HepG2 (cell line): ENCODE measurements at regions of chr14 and their contacts with region 1.

Region 1: DNA sequence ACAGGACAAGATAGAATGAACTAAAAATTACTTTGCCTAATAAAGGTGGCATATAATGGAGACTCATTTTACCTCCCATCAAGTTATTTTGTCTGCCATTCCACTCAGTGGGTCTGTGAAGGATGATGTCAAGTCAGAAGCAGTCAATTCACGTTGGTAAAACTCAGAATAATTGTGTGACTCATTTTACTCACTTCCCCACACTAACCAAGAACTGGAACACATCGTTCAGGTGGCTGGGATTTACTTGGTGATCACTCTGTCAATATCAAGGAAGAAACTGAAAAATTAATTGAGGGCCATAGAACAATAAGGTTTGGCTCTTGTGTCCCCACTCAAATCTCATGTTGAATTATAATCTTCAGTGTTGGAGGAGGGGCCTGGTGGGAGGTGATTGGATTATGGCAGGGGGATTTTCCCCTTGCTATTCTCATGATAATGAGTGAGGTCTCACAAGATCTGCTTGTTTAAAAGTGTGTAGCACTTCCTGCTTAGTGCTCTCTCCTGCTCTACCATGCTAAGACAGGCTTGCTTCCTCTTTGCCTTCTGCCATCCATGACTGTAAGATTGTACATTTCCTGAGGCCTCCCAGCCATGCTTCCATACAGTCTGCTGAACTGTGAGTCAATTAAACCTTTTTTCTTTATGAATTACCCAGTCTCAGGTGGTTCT is 35.7 kb upstream of the GTF2A1 start:
- DNase-seq: no peak
- ATAC-seq: no peak
- H3K4me3 ChIP-seq: no peak overlapping the region
- H3K27ac ChIP-seq: no peak overlapping the region
- H3K4me1 ChIP-seq: no peaks in the 10 kb centered on the region
- H3K27me3 ChIP-seq: no peaks in the 10 kb centered on the region
- CTCF ChIP-seq: no peak
- EP300 ChIP-seq: no peak
- POLR2A ChIP-seq: no peak
- RAD21 ChIP-seq: no peak

Region 2: DNA sequence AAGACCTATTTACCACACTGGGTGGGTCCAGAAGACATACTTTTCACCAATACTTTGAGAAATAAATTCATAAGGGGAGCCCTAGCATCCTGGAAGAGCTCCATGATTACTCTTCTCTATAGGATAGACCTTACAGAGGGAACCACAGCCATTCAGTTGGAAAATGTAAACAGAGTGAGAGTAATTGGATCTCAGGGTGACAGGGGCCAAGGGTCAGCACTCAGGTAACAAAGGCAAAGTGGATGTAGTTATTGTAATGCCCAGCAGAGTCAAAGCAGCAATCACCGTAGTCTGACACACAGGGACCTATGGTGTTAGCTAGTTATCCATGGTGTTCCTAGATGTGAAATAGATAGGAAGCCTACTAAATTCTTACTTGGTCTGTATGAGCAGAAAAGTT is 24.9 kb before region 1 on chr14:
- CTCF ChIA-PET with region 1: no interaction called
- POLR2A ChIA-PET with region 1: no interaction called
- in situ Hi-C with region 1: no loop called
- intact Hi-C with region 1: loop called (anchors 1 kb)
- DNase-seq: peak; percentile 27
- ATAC-seq: peak; percentile 94
- H3K4me3 ChIP-seq: no peak overlapping the region
- H3K27ac ChIP-seq: no peak overlapping the region
- H3K4me1 ChIP-seq: peaks cover 26% of the 10 kb centered on the region
- H3K27me3 ChIP-seq: no peaks in the 10 kb centered on the region
- CTCF ChIP-seq: no peak
- EP300 ChIP-seq: no peak
- POLR2A ChIP-seq: no peak
- RAD21 ChIP-seq: no peak